PC-9 (cell line): ENCODE measurements at regions of chrX and their contacts with region 1.

Region 1: DNA sequence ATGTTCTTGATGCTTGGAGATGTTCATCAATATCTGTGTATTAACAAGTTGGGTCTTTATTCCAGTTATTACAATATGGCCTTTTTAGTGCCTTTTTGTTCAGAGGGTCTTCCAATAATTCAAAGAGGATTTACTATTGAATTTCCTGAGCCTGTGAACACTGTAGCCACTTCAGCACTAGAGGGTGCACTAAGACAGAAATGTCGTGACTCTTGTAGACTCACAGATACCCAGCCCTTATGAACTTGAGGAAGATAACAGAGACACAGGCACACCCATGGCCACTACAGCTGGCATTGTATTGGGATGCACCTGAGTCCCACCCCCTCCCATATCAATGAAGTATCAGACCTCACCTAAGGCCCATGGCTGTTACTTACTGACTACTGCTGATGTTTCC is 54.4 kb upstream of the ACTRT1 start:
- DNase-seq: no peak
- H3K4me3 ChIP-seq: no peak overlapping the region
- H3K27ac ChIP-seq: no peak overlapping the region
- H3K4me1 ChIP-seq: no peaks in the 10 kb centered on the region
- H3K27me3 ChIP-seq: no peaks in the 10 kb centered on the region
- CTCF ChIP-seq: peak; percentile 68

Region 2: GRCh38 chrX:127764674-127765073 is 342.0 kb before region 1 on chrX:
- CTCF ChIA-PET with region 1: no interaction called
- POLR2A ChIA-PET with region 1: no interaction called
- intact Hi-C with region 1: no loop called
- DNase-seq: no peak
- H3K4me3 ChIP-seq: no peak overlapping the region
- H3K27ac ChIP-seq: no peak overlapping the region
- H3K4me1 ChIP-seq: no peaks in the 10 kb centered on the region
- H3K27me3 ChIP-seq: no peaks in the 10 kb centered on the region
- CTCF ChIP-seq: no peak

Region 3: GRCh38 chrX:127908384-127908783 is 198.2 kb before region 1 on chrX:
- CTCF ChIA-PET with region 1: no interaction called
- POLR2A ChIA-PET with region 1: no interaction called
- intact Hi-C with region 1: loop called (anchors 10 kb)
- DNase-seq: no peak
- H3K4me3 ChIP-seq: no peak overlapping the region
- H3K27ac ChIP-seq: no peak overlapping the region
- H3K4me1 ChIP-seq: no peaks in the 10 kb centered on the region
- H3K27me3 ChIP-seq: no peaks in the 10 kb centered on the region
- CTCF ChIP-seq: no peak